Aorta (tissue), 5 donors: ENCODE measurements at regions of chr3 and their contacts with region 1.

Region 1: DNA sequence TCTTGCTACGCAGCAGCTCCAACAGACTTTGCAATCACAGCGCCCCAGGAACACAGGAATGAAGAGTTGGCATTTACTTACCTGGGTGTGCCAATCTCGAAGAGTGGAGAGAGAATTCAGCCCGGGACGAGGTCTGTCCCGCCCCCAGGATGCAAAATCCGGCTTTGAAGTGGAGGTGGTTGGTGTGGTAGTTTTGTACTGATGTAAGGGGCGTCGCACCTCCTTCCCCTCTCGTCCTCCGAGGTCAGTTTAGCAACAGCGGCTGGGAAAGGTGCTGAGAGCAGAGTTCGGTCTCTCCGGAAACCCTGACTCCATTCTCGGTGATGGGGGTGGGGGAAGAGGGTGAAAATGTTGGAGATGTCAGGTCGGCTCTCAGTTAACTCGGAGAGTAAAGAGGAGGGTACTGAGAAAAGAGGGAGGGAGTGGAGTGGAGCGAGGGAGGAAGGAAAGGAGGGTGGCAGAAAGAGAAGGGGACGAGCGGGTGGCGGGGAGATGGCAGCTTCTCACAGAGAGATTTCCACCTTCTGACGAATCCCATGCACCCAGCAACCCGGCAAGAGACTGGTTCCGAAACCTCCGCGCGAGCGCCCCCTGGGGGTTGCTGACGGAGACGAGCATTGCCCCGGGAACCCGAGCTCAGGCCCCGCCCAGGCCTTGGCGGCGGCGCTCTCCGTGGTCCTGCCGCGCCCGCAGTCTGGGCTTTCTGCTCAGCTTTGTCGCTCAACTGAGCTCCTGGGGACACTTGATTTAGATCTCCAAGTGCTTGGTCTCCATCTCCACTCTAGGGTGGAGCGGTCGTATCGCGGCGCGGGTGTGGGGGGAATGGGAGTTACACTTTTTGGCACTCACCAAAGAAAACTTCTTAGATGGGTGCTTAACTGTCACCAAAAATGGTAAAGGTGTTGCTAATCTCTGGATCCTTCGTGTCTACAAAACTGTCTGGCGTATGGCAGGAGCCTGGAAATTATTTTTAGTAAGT is at the start of gene CPNE4:
- DNase-seq: peak; percentile 89 to 94
- ATAC-seq: peak; percentile 91
- H3K4me3 ChIP-seq: peak within 1 kb of the TSS; percentile 27 to 40
- H3K27ac ChIP-seq: no peak within 1 kb of the TSS
- H3K4me1 ChIP-seq: no peaks in the 10 kb centered on the region
- H3K27me3 ChIP-seq: no peaks in the 10 kb centered on the region
- total RNA-seq, gene CPNE4: 0.45 to 1.6 TPM

Region 2: DNA sequence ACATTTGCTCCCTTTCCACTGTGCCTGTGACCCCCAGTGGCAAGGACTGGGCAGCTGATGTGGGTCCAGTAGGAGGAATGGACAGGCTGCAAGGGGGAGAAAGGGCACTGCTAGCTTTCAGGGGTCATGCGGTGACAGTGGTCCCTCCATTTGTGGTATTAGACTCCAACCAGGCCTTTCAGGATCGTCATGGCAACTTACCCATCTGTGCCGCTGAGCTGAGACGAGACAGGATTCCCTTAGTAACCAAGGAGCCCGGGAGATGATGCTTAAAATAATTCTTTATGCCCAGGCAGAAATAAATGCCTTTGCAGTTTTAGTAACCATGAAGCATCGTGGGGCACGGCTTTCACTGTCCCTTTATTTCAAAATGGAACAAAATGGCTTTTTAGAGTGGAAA is 516.1 kb before region 1 on chr3:
- intact Hi-C with region 1: no loop called
- DNase-seq: no peak
- ATAC-seq: no peak
- H3K4me3 ChIP-seq: no peak overlapping the region
- H3K27ac ChIP-seq: no peak overlapping the region
- H3K4me1 ChIP-seq: no peaks in the 10 kb centered on the region
- H3K27me3 ChIP-seq: no peaks in the 10 kb centered on the region

Region 3: DNA sequence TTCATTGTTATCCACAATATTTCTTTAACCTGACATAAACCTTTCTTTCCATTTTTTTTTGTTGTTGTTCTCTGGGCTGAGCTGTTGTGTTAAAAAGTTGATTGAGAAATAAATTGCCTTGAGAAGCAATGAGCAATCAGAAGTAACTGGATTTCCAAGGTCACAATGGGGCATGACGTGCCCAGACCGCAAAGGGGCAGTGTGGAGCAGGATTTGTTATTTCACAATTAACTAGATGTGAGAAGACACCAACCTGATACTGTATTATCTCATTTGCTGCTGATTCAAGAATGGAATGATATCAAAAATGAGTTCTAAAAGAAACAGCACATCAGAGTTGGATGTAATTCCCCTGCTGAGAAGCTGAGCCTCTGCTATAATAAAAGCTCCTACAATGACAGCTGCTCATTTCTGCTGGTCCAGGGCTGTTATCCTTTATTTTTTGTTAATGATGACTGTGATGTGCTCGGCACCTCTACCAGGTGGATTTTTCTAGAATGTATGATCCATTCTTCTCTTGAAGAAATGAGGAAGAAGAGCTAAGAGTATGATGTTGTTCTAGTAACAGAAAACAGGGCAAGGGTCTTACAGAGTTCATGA is 28.1 kb before region 1 on chr3:
- intact Hi-C with region 1: no loop called
- DNase-seq: peak in 1 of 2 donors; percentile 45
- ATAC-seq: no peak
- H3K4me3 ChIP-seq: no peak overlapping the region
- H3K27ac ChIP-seq: no peak overlapping the region
- H3K4me1 ChIP-seq: peaks cover 0 to 3% of the 10 kb centered on the region in 2 donors
- H3K27me3 ChIP-seq: peaks cover 0 to 2% of the 10 kb centered on the region in 2 donors

Region 4: DNA sequence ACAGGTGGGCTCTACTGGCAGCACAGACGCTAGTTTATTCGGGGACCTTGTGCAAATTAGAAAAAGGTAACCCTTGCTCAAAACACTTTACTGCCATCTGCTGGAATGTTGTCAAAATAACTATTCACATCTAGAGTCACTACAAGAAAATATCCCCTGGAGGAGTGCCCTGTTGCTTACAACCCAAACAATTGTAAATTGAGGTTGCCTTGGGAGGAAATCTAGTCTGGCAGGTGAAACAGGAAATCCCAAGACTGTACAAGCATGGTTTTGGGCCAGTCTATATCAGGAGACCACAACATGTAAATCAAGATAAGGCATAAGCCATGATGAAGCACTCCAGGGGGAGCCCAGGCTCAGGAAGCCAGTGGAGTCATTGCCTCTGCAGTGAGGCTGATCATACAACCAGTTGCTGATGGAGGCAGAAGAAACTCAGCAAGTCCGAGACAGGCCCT is 145.6 kb after region 1 on chr3:
- intact Hi-C with region 1: loop called (anchors 2 to 5 kb)
- DNase-seq: no peak
- ATAC-seq: no peak
- H3K4me3 ChIP-seq: no peak overlapping the region
- H3K27ac ChIP-seq: no peak overlapping the region
- H3K4me1 ChIP-seq: no peaks in the 10 kb centered on the region
- H3K27me3 ChIP-seq: no peaks in the 10 kb centered on the region